ENCODE measurements at regions of chr18 and their contacts with region 1.

Region 1: GRCh38 chr18:50780144-50780543 is 39.7 kb downstream of the MRO start:
- DNase-seq: no peak
- ATAC-seq: no peak
- H3K4me3 ChIP-seq: no peak overlapping the region
- H3K27ac ChIP-seq: no peak overlapping the region
- H3K4me1 ChIP-seq: no peaks in the 10 kb centered on the region
- H3K27me3 ChIP-seq: no peaks in the 10 kb centered on the region; a peak in 2 of 4 replicates
- CTCF ChIP-seq: no peak
- EP300 ChIP-seq: no peak
- POLR2A ChIP-seq: no peak
- RAD21 ChIP-seq: no peak

Region 2: DNA sequence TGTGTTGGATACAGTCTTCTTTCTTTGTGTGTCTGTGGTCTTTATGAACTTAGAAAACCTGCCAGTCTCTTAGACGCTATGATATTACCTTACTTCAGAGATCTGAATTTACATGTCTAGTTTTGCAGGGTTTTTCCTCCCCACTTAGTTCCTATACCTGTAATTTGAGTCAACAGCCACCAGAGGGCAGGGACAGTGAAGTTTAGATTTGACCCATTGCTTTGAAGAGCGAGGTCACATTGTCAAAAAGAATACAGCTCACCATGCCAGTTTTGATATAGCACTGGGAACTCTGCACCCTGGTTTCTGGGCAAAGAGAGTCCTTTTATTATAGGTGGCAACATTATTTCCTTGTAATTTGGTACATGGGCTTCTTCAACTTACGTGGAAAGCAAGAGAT is 118.0 kb before region 1 on chr18:
- CTCF ChIA-PET with region 1: interaction called, 4 read pairs
- POLR2A ChIA-PET with region 1: no interaction called
- RAD21 ChIA-PET with region 1: no interaction called
- SMC1A ChIA-PET with region 1: no interaction called
- in situ Hi-C with region 1: no loop called
- intact Hi-C with region 1: loop called (anchors 5 kb)
- DNase-seq: no peak
- ATAC-seq: no peak
- H3K4me3 ChIP-seq: no peak overlapping the region
- H3K27ac ChIP-seq: no peak overlapping the region
- H3K4me1 ChIP-seq: no peaks in the 10 kb centered on the region
- H3K27me3 ChIP-seq: no peaks in the 10 kb centered on the region
- CTCF ChIP-seq: peak; percentile 18 to 50 (median 41); a peak in 3 of 6 replicates
- EP300 ChIP-seq: no peak
- POLR2A ChIP-seq: no peak
- RAD21 ChIP-seq: peak; percentile 56